Right ventricle myocardium inferior (tissue), 1 donor: ENCODE measurements at regions of chr4 and their contacts with region 1.

Region 1: DNA sequence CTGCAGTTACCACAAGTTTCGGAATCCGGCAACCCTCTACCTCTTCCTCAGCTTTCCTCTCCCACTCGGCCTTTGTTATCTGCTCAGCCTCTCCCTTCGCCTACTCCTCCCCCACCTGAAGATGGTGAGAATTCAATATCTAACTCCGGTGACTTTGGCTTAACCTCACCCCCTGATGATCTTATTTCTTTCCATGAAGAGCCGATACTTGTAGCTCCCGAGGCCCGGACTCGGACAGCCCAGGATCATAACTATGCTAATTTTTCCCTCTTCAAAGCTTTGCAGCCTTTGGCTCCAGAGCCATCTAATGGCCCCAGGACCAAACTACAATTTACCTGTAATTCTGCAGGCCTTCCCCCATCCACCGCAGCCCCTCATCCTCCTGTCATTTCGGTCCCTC is 32.0 kb upstream of the MGST2 start:
- DNase-seq: no peak
- ATAC-seq: peak; percentile 97

Region 2: GRCh38 chr4:139499026-139499585 is 134.6 kb before region 1 on chr4:
- intact Hi-C with region 1: loop called (anchors 5 kb)
- DNase-seq: no peak
- ATAC-seq: no peak

Region 3: DNA sequence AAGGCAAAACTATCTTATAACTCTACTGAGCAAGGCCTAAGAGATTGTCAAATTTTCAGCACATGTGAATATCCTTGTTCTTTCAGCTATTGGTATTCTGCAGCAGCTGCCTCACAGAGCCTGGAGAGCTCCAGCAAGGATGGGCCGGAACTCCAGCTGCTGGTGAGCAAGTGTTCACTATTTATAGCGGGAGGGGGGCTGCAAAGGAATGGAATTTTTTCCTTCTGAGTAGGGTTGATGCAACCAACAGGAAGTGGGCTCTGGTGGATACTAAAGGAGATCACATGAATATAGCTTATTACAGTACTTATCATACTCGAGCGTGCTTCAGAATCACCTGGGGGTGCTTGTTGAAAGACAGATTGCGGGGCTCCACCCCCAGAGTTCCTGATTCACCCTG is 57.4 kb before region 1 on chr4:
- intact Hi-C with region 1: no loop called
- DNase-seq: no peak
- ATAC-seq: no peak

Region 4: DNA sequence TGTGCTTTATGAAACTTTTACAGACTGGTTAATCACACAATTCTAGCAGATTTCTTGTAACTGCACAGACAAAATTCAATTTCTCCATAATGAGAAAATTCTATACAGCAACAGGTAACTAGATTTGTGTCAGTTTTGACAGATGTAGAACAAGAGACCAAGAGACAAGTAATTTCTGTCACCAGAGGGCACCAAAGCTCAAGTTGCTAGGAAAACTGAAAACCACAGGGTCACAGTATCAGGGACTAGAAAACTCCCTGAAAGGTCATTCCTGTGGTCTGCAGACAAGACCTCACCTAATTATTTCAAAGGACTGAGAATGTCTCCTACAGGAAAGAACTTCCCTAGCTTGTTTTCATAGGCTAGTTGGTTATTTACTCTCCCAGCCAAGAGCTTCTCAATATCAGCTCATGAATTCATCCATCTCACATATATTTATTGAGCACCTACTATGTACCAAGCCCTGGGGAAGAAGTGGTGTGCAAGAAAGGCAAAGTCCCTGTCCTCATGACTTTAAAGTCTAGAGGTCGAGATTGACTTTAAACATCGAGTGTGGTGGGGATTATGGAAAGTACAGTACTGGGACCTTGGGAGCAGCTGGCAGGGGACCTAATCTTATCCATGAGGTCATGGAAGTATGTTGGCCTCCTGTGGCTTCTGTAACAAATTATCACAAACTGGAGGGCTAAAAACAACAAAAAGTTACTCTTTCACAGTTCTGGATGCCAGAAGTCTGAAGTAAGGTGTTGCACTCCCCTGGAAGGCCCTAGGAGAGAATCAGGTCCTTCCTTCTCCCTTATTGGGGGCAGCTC is 29.9 kb before region 1 on chr4:
- intact Hi-C with region 1: loop called (anchors 2 kb)
- DNase-seq: no peak
- ATAC-seq: peak; percentile 52